Activated B cell treated with CpG ODN at 0.5 μM for 24 hours (primary cell): ENCODE measurements at regions of chr15 and their contacts with region 1.

Region 1: DNA sequence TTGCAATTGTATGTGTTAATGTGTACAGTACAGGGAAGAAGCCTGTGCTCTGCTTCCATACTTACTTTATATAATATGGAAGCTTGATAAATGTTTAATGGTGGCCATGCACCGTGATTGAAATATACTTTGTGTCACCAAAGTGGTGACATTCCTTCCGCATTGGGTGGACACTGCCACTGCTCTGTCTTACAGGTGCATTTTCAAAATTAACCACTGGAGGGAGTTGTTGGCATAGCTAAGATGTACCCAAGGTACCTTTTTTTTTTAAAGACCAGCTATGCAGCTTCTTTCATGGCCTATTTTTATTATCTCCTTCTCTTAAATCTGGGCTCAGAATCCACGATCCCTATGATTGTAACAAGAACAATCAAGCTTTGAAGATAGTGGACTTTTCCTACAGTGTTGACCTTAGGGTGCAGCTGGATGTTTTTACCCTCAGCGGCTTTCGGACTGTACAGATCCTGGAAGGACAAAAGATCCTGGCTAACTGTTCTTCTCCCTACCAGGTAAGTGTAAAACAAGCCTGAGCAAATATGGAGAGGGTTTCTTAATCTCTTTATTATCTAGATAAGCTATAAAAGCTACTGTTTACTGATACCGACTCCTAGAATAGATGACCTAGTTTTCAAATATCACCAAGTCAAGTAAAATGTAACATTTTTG is 21.6 kb upstream of the PAK6 start:
- DNase-seq: no peak
- ATAC-seq: peak; percentile 100
- H3K4me3 Mint-ChIP-seq: no peak overlapping the region
- H3K27ac Mint-ChIP-seq: no peak overlapping the region
- H3K4me1 Mint-ChIP-seq: no peaks in the 10 kb centered on the region
- H3K27me3 Mint-ChIP-seq: no peaks in the 10 kb centered on the region
- CTCF ChIP-seq: peak; percentile 41

Region 2: GRCh38 chr15:40029979-40030893 is 187.1 kb before region 1 on chr15:
- CTCF ChIA-PET with region 1: interaction called, 7 read pairs
- POLR2A ChIA-PET with region 1: no interaction called
- intact Hi-C with region 1: loop called (anchors 1 kb)
- DNase-seq: no peak
- ATAC-seq: no peak
- H3K4me3 Mint-ChIP-seq: no peak overlapping the region
- H3K27ac Mint-ChIP-seq: no peak overlapping the region
- H3K4me1 Mint-ChIP-seq: no peaks in the 10 kb centered on the region
- H3K27me3 Mint-ChIP-seq: no peaks in the 10 kb centered on the region
- CTCF ChIP-seq: peak; percentile 16

Region 3: DNA sequence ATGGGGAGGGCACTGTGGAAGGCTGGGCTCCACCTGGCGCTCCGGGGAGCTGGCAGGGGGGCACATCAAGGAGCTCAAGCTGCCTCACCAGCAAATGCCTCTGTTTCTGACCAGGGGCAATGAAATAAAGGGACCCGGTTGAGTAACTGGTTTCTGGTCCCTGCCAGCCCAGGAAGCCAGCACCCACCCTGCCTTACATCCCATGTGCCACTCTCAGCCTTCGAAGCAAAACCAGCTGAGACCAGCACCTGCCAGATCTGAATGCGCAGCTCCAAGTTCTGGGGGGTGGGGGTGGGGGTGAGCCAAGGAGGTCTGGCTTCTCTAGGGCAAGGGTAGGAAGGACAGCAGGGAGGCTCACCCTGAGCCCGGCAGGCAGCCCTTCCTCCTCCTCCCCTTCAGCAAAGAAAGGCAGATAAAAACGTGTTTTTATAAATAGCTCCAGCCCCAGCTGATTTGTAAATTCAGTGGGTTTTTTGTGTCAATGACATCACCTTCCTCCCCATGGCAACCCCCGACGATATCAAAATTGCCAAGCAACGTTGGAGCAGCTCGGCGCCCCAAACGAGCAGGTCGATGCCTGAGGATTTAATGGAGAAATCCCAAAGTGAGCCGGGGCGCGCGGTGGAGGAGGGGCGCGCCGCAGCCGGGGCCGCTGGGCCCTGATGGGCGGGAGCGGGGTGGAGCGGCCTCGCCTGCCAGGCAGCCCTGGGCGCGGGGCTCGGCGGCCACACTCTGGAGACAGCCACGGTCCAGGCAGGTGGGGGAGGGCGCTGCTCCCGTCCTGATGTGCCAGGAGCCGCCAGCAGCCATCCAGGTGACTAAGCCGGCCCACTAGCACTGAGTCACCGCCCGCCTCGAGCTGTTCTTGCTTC is 21.5 kb after region 1 on chr15 and contains the start of gene PAK6:
- CTCF ChIA-PET with region 1: interaction called, 10 read pairs
- POLR2A ChIA-PET with region 1: interaction called, 3 read pairs
- intact Hi-C with region 1: no loop called
- DNase-seq: peak; percentile 36
- ATAC-seq: peak; percentile 48
- H3K4me3 Mint-ChIP-seq: peak within 1 kb of the TSS; percentile 72
- H3K27ac Mint-ChIP-seq: no peak within 1 kb of the TSS
- H3K4me1 Mint-ChIP-seq: peaks cover 37% of the 10 kb centered on the region
- H3K27me3 Mint-ChIP-seq: peaks cover 12% of the 10 kb centered on the region
- CTCF ChIP-seq: no peak
- total RNA-seq, gene PAK6: 0.34 and 0.40 TPM in 2 replicates